ENCODE measurements at regions of chr1 and their contacts with region 1.

Region 1: DNA sequence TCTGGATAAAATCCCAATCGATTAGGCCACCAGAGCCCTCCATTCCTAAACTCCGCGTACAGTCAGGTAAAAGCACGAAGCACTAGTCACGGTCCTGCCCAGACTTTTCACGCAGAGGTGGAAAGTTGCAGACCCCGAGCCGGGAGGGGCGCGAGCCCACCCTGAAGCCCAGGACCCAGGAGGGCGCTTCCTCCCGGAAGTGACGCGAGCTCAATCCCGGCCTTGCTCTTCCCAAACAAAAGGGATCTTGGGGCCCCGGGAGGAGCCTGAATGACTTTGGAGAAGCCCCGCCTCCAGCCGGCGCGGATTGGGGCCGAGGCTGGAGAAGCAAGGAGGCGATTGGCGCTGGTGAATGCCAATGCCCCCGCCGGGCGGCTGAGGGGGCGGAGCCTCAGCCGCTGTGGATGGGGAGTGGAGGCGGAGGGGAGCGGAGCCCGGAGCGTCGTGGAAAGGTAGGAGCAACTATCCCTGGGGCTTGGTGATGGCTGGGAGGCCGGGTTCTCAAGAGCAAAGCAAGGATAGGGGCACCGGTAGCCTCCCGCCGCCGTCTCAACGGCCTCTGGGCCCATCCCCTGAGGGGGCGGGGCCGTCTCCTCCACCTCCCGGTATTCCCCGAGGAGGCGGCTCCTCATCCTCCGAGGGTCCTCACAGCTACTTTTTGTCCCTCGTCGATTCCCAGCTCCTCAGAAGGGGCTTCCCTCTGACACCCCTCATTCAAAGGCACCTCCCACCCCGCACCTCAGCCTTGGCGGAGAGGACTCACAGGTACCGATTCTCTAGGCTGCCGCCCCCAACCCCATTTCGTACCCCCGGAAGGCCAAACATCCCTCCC is at the start of gene CTTNBP2NL:
- DNase-seq: peak; percentile 88
- H3K4me3 Mint-ChIP-seq: peak within 1 kb of the TSS; percentile 88
- H3K27ac Mint-ChIP-seq: no peak within 1 kb of the TSS
- H3K4me1 Mint-ChIP-seq: peaks cover 20% of the 10 kb centered on the region
- H3K27me3 Mint-ChIP-seq: peaks cover 38% of the 10 kb centered on the region

Region 2: GRCh38 chr1:112466078-112466660 is 70.1 kb after region 1 on chr1:
- CTCF ChIA-PET with region 1: interaction called, 78 read pairs
- DNase-seq: peak; percentile 89
- H3K4me3 Mint-ChIP-seq: peak overlapping the region; percentile 63
- H3K27ac Mint-ChIP-seq: no peak overlapping the region
- H3K4me1 Mint-ChIP-seq: peaks cover 13% of the 10 kb centered on the region
- H3K27me3 Mint-ChIP-seq: peaks cover 28% of the 10 kb centered on the region

Measured in activated naive CD4-positive, alpha-beta T cell treated with anti-CD3 and anti-CD28 coated beads, Interleukin-2, amount 10 ng/mL, durations not matched to agents 7 days and 5 days (primary cell).